ENCODE measurements at regions of chr6 and their contacts with region 1.

Region 1: DNA sequence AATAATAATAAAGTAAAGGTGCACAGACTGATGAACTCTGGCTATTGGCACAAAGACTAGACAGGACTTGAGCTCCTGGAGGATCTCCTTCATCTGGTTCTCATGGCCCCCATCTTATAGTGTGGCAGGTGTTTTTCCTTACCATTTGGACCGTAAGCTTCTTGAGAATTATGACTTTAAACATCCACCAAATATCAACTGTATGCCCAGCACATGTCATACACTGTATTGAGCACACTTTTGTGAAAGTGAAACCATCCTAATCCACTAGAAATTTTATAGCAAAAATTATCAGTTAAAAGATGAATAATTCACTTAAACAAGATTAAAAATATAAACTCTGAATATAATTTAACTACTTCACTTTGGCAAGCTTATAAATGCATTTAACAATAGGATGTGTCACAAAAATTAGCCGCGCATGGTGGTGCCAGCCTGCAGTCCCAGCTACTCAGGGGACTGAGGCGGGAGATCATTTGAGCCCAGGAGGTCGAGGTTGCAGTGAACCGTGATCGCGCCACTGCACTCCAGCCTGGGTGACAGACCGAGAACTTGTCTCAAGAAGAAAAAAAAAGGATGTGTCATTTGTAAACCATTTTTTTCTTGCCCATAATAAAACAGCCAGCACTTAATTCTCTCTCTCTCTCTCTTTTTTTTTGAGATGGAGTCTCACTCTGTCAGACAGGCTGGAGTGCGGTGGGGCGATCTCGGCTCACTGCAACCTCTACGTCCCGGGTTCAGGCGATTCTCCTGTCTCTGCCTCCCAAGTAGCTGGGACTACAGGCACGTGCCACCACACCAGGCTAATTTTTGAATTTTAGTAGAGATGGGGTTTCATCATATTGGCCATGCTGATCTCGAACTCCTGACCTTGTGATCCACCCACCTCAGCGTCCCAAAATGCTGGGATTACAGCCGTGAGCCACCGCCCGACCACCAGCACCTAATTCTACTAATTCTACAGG is 9.1 kb downstream of the HIVEP2 start:
- DNase-seq: peak; percentile 44
- ATAC-seq: peak; percentile 57
- H3K4me3 Mint-ChIP-seq: peak overlapping the region; percentile 79
- H3K27ac Mint-ChIP-seq: peak overlapping the region; percentile 90
- H3K4me1 Mint-ChIP-seq: peaks cover 81% of the 10 kb centered on the region
- H3K27me3 Mint-ChIP-seq: no peaks in the 10 kb centered on the region

Region 2: DNA sequence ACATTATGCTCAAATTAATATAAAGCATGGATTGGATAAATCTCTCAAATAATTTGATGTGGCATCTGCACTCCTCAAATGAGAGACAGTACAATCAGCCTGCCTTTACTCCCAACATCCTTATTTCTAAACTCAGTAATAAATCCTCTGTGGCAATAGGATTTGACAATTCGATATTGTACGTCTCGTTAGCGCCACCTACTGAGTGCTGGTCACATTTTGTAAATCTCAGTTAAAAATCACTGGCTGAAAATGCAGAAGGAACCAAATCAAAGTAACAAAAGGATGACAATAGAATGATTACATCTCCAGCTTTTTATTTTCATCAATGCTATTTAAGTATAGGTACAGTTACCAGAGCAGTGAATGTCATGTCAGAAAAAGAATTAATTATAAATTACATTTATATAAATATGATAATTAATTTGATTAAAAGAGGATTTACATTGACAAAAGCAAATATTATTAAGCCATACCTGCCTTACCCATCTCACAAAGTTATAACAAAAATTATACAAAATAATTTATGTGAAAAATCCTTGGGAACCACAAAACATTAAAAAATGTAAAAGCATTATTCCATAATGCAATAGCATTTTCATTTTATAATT is 823.3 kb before region 1 on chr6:
- CTCF ChIA-PET with region 1: no interaction called
- POLR2A ChIA-PET with region 1: no interaction called
- DNase-seq: peak; percentile 81
- ATAC-seq: no peak
- H3K4me3 Mint-ChIP-seq: no peak overlapping the region
- H3K27ac Mint-ChIP-seq: no peak overlapping the region
- H3K4me1 Mint-ChIP-seq: no peaks in the 10 kb centered on the region
- H3K27me3 Mint-ChIP-seq: peaks cover 5% of the 10 kb centered on the region

Region 3: GRCh38 chr6:142686507-142686887 is 249.3 kb before region 1 on chr6:
- CTCF ChIA-PET with region 1: no interaction called
- POLR2A ChIA-PET with region 1: no interaction called
- DNase-seq: no peak
- ATAC-seq: no peak
- H3K4me3 Mint-ChIP-seq: no peak overlapping the region
- H3K27ac Mint-ChIP-seq: no peak overlapping the region
- H3K4me1 Mint-ChIP-seq: peaks cover 9% of the 10 kb centered on the region
- H3K27me3 Mint-ChIP-seq: no peaks in the 10 kb centered on the region

Region 4: DNA sequence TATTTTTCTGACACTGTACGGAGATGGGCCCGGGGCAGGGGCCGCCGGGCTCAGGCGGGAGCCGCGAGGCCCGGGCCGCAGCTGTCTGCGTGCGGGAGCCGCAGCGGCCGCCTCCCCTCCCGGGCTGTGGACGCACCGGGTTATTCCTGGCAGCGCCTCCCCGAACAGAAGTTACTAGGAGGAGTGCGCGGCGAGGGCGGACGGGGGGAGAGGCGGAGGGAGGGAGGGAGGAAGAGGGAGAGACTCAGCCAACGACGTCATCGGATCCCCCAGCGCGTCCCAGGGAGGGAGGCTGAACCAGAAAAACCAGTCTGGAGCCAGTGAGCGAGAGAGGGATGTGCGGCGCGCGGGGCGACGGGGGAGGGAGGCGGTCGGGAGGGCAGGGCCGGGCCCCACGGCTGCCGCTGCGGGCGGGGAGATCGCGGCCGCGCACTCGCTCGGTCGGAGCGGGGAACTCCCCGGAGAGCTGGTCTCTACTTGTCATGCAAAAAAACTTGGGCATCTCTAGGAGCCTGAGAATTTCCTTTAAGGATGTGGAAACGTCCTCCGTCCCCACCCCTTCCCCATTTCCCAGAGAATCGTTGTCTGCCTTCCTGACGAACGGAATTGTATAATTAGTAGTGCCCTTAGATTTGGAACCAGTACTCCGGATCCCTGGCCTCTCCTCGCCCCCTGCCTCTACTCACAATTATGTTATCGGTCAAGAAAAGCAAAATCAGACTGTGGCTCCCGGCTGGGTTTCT is 10.5 kb after region 1 on chr6:
- CTCF ChIA-PET with region 1: interaction called, 6 read pairs
- POLR2A ChIA-PET with region 1: interaction called, 64 read pairs
- DNase-seq: peak; percentile 88
- ATAC-seq: peak; percentile 42
- H3K4me3 Mint-ChIP-seq: peak overlapping the region; percentile 100
- H3K27ac Mint-ChIP-seq: peak overlapping the region; percentile 94
- H3K4me1 Mint-ChIP-seq: peaks cover 38% of the 10 kb centered on the region
- H3K27me3 Mint-ChIP-seq: peaks cover 3% of the 10 kb centered on the region